ENCODE measurements at regions of chr16 and their contacts with region 1.

Region 1: GRCh38 chr16:30052671-30053372 is 12.7 kb upstream of the ALDOA start:
- DNase-seq: peak; percentile 95
- ATAC-seq: peak; percentile 81
- H3K4me3 Mint-ChIP-seq: peak overlapping the region; percentile 80
- H3K27ac Mint-ChIP-seq: peak overlapping the region; percentile 78
- H3K4me1 Mint-ChIP-seq: peaks cover 29% of the 10 kb centered on the region
- H3K27me3 Mint-ChIP-seq: no peaks in the 10 kb centered on the region

Region 2: DNA sequence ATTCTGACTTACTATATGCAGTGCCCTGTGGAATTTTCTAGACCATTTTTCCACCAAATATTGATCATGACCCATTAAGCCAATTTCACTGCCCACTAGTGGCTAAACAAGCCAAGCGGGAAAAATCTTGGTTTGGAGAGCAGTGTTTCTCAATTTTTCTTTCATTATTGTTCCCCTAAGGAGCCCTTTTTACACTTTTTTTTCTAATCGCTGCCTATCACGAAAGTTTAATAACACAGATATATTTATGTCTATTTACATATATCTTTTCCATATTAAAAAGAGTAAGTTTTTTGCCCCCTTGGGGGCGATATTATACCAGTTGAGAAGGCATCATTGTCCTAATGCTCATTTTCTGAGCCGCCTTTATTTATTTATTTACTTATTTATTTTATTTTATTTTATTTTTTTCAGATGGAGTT is 11.0 kb before region 1 on chr16:
- CTCF ChIA-PET with region 1: interaction called, 17 read pairs
- DNase-seq: no peak
- ATAC-seq: no peak
- H3K4me3 Mint-ChIP-seq: no peak overlapping the region
- H3K27ac Mint-ChIP-seq: no peak overlapping the region
- H3K4me1 Mint-ChIP-seq: peaks cover 5% of the 10 kb centered on the region
- H3K27me3 Mint-ChIP-seq: peaks cover 19% of the 10 kb centered on the region

Region 3: DNA sequence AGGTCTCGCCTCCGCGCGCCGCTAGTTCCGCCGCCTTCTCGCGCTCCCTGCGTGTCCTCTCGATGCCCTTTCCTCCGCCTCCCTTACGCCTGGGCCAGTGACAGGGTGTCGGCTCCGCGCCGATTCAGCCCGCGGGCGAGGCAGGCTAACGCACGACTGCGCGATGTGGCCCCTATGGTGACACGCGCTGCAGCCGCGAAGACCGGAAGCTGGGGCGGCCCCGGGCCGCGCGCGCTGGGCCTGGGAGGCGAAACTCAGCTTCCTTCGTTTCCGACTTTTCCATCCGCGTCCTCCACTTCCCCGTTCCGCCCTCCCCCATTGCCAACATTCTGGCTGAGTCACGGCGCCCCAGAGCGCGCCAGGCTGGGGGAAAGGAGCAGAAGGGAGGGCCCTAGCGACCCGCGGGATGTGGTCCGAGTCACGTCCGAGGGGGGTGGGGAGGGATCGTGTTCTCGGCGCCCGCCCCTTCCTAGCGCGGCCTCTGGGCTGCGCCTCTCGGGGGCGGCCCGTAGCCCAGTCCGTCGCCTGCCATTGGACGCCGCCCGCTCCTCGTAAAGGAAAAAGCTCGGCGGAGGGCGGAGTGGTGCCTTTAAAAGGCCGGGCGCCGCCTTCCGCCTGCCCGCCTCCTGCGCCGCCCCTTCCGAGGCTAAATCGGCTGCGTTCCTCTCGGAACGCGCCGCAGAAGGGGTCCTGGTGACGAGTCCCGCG is 12.5 kb after region 1 on chr16 and contains the start of gene ALDOA:
- CTCF ChIA-PET with region 1: interaction called, 16 read pairs
- DNase-seq: peak; percentile 98
- ATAC-seq: peak; percentile 89
- H3K4me3 Mint-ChIP-seq: peak within 1 kb of the TSS; percentile 95
- H3K27ac Mint-ChIP-seq: peak within 1 kb of the TSS; percentile 97
- H3K4me1 Mint-ChIP-seq: peaks cover 45% of the 10 kb centered on the region
- H3K27me3 Mint-ChIP-seq: no peaks in the 10 kb centered on the region
- total RNA-seq, gene ALDOA: 1,292 to 1,318 TPM

Measured in activated CD8-positive, alpha-beta memory T cell treated with anti-CD3 and anti-CD28 coated beads, Interleukin-2, amount 10 ng/mL, durations not matched to agents 7 days and 5 days (primary cell).